Activated CD4-positive, alpha-beta memory T cell treated with anti-CD3 and anti-CD28 coated beads, Interleukin-2, amount 10 ng/mL, durations not matched to agents 7 days and 5 days (primary cell): ENCODE measurements at regions of chr7 and their contacts with region 1.

Region 1: DNA sequence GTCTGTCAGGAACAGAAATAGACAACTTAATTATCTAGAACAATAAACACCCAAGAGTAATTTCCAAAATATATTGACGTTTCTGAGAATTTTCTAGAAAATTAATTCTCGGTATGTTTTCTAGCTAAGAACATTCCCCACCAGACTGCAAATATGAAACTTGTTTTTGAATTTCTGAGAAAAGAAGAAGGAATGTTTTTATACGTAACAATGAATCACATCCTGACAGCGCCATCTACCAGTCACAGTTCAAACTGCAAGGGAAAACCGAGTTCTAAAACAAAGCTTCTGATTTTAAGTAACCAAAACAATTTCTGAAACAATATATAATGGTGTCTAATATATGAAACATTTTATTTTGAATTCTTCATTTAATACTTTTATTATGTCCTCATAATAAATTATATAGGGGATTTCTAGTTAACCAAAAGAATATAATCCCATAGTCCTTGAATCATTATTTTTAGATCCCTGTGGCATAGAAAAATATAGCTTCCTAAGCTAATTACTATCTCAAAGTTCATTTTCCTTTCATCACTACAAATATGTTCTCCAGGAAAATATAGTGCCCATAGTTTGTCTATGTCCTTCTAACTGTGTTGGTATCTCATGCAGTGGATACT is 34.5 kb upstream of the MEOX2 start:
- DNase-seq: no peak
- H3K4me3 Mint-ChIP-seq: no peak overlapping the region
- H3K27ac Mint-ChIP-seq: no peak overlapping the region
- H3K4me1 Mint-ChIP-seq: no peaks in the 10 kb centered on the region
- H3K27me3 Mint-ChIP-seq: no peaks in the 10 kb centered on the region

Region 2: GRCh38 chr7:15709978-15710377 is 11.0 kb before region 1 on chr7:
- CTCF ChIA-PET with region 1: interaction called, 11 read pairs
- POLR2A ChIA-PET with region 1: no interaction called
- DNase-seq: no peak
- H3K4me3 Mint-ChIP-seq: no peak overlapping the region
- H3K27ac Mint-ChIP-seq: no peak overlapping the region
- H3K4me1 Mint-ChIP-seq: peaks cover 6% of the 10 kb centered on the region
- H3K27me3 Mint-ChIP-seq: no peaks in the 10 kb centered on the region